ENCODE measurements at regions of chr10 and their contacts with region 1.

Region 1: GRCh38 chr10:48656241-48656913 is 28.3 kb upstream of the WDFY4 start:
- H3K4me3 Mint-ChIP-seq: peak overlapping the region; percentile 72
- H3K27ac Mint-ChIP-seq: peak overlapping the region; percentile 70
- H3K4me1 Mint-ChIP-seq: peaks cover 67% of the 10 kb centered on the region
- H3K27me3 Mint-ChIP-seq: peaks cover 44% of the 10 kb centered on the region

Region 2: DNA sequence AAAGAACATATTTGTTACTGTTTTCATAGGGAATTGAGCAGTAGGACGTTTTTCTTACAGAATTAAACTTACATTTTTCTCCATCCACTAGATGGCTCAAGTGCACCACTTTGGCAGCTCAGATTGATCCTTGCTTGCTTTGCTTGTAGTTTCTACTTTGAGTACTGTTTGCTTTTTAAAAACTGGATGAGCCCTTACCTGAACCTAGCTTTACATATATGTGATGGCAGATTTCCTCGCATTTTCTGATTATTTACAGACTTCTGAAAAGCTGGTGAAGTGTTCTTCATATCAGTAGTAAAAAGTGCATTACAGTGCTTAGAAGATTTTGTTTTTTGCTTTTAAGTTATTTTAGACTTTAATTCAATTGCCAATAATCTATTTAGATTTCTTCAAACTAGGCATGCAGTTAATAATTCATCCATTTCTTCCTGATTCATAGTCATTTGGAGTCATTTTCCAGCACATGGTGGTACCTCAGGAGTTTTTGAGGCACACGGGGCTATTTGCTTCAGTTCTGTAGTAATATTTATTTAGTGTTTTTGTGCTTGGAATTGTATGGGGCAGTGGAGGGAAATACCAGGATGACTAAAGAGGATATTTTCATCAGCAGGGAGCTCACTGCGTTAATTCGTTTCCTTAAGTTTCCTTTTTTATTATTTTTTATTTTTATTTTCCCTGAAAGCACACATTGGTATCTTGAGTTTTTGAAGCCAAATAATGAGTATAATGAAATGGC is 292.6 kb before region 1 on chr10:
- intact Hi-C with region 1: loop called (anchors 5 kb)
- H3K4me3 Mint-ChIP-seq: no peak overlapping the region
- H3K27ac Mint-ChIP-seq: no peak overlapping the region
- H3K4me1 Mint-ChIP-seq: peaks cover 24% of the 10 kb centered on the region
- H3K27me3 Mint-ChIP-seq: no peaks in the 10 kb centered on the region

Region 3: DNA sequence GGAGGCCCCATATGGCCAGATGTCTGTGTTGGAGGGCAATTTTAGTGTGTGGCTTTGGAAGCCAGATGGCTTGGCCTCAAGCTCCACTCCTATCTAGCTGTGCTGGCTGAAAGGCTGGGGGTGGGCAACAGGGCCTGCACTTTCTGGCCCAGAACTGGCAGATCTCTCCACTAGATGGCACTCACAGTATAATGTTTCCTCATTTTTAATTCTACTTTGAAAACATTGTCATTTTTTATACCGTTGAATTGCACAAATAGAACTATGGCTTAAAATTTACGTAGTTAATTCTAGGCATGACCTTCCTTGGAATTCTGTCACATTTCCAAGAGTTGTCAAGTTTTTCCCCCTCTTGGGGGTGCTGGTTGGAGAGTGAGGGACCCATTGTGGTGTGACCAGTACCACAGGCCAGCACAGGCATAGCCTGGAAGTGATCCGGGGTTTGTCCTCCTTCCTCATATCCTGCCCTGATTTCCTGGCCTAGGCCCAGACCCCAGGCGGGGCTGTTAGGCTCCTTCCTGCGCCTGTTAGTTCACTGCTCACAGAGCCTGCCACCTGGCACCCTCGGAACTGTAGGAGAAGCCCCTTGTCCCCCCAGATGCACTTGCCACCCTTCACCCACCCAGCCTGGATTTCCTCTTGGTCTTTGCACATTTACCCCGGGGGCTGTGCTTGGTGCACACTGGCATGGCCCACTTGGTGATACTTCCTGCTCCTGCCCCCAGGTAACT is 104.4 kb before region 1 on chr10:
- intact Hi-C with region 1: loop called (anchors 1 kb)
- H3K4me3 Mint-ChIP-seq: no peak overlapping the region
- H3K27ac Mint-ChIP-seq: peak overlapping the region; percentile 47
- H3K4me1 Mint-ChIP-seq: peaks cover 29% of the 10 kb centered on the region
- H3K27me3 Mint-ChIP-seq: peaks cover 10% of the 10 kb centered on the region

Region 4: GRCh38 chr10:48634198-48634983 is 22.0 kb before region 1 on chr10:
- intact Hi-C with region 1: loop called (anchors 1 kb)
- H3K4me3 Mint-ChIP-seq: peak overlapping the region; percentile 46
- H3K27ac Mint-ChIP-seq: peak overlapping the region; percentile 93
- H3K4me1 Mint-ChIP-seq: peaks cover 90% of the 10 kb centered on the region
- H3K27me3 Mint-ChIP-seq: peaks cover 4% of the 10 kb centered on the region

Region 5: GRCh38 chr10:48745662-48746245 is 89.4 kb after region 1 on chr10:
- intact Hi-C with region 1: no loop called
- H3K4me3 Mint-ChIP-seq: no peak overlapping the region
- H3K27ac Mint-ChIP-seq: no peak overlapping the region
- H3K4me1 Mint-ChIP-seq: peaks cover 76% of the 10 kb centered on the region
- H3K27me3 Mint-ChIP-seq: no peaks in the 10 kb centered on the region

Region 6: GRCh38 chr10:48792687-48793096 is 136.3 kb after region 1 on chr10:
- intact Hi-C with region 1: loop called (anchors 10 kb)
- H3K4me3 Mint-ChIP-seq: no peak overlapping the region
- H3K27ac Mint-ChIP-seq: peak overlapping the region; percentile 43
- H3K4me1 Mint-ChIP-seq: peaks cover 36% of the 10 kb centered on the region
- H3K27me3 Mint-ChIP-seq: no peaks in the 10 kb centered on the region

Region 7: GRCh38 chr10:49164559-49165188 is 508.3 kb after region 1 on chr10:
- intact Hi-C with region 1: loop called (anchors 5 kb)
- H3K4me3 Mint-ChIP-seq: no peak overlapping the region
- H3K27ac Mint-ChIP-seq: peak overlapping the region; percentile 15
- H3K4me1 Mint-ChIP-seq: peaks cover 83% of the 10 kb centered on the region
- H3K27me3 Mint-ChIP-seq: peaks cover 2% of the 10 kb centered on the region